RWPE1 (cell line): ENCODE measurements at regions of chr7 and their contacts with region 1.

Region 1: DNA sequence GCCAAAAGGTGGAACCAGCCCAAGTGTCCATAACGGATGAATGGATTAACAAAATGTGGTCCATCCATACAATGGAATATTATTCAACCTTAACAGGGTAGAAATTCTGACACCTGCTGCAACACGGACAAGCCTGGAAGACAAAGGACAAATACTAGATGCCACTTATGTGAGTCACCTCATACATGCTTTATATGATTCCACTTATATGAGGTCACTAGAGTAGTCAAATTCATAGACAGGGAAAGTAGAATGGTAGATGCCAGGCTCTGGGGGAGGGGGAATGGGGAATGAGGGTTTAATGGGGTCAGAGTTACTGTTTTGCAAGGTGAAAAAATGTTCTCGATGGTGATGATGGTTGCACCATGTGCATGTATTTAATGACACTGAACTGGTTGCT is 34.0 kb upstream of the CYTH3 start:
- DNase-seq: peak; percentile 78
- H3K27ac ChIP-seq: no peak overlapping the region
- CTCF ChIP-seq: no peak

Region 2: GRCh38 chr7:6283391-6284390 is 22.8 kb before region 1 on chr7:
- CTCF ChIA-PET with region 1: interaction called, 4 read pairs
- POLR2A ChIA-PET with region 1: interaction called, 10 read pairs
- DNase-seq: peak; percentile 45
- H3K27ac ChIP-seq: peak overlapping the region; percentile 100
- CTCF ChIP-seq: no peak

Region 3: DNA sequence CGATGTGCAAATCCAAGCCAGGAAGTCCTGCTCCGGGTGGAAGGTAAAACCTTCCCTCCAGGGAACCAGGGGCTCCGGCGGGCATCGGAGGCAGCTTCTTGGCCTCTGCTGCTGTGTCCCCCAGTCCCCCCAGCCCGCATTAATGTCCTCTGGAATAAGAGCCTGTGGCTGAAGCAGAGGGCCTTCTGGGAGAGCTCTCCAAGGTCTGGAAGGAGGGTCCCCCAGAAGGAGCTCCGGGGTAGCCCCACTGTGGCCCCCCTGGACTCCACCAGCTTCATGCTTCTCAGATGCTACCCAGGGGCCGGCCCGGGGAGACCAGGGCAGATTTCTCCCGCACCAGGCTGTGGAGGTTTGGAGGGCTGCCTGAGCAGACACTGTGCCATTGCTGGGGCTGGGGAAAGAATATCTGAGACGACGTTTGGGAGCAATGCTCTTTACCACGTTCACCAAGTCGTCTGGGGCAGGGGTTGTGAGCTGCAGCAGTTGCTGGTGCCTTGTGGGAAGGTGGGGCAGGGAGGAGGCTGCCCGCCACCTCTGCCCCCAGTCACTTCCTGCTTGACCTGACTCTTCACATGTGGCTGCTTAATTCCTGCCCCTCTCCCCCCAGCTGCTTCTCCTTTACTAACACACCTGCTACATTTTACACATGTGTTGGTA is 317.2 kb after region 1 on chr7:
- CTCF ChIA-PET with region 1: no interaction called
- POLR2A ChIA-PET with region 1: no interaction called
- DNase-seq: no peak
- H3K27ac ChIP-seq: no peak overlapping the region
- CTCF ChIP-seq: no peak